ENCODE measurements at regions of chr14 and their contacts with region 1.

Region 1: DNA sequence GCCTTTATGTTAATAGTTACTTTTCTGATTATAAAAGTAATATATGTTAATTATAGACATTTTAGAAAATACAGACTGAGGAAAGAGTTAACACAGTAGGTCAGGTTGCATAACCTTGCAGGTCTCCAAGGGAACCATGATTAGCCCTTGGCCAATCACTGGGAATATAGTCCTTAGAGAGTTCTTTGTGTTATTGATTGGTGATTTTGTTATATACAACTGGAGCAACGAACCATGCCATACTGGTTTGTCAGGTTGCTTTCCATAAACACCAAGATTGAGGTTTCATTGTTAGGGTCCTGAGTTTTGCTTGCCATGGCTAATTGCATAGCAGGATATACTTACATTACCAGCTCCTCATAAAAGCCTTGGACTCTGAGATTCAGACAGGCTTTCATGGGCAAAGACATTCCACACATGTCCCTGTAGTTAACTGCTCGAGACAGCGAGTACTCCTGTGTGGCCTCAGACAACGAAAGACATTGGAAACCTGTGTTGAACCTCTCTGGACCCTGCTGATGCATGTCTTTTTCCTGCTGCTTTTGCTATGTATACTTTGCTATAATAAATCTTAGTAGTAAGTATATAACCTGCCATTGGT is 33.7 kb downstream of the MAPK1IP1L start:
- DNase-seq: no peak
- H3K4me3 ChIP-seq: no peak overlapping the region
- H3K27ac ChIP-seq: no peak overlapping the region
- H3K4me1 ChIP-seq: no peaks in the 10 kb centered on the region
- H3K27me3 ChIP-seq: no peaks in the 10 kb centered on the region
- CTCF ChIP-seq: no peak
- EP300 ChIP-seq: no peak
- POLR2A ChIP-seq: no peak

Region 2: GRCh38 chr14:55160989-55161388 is 75.8 kb after region 1 on chr14:
- intact Hi-C with region 1: loop called (anchors 5 to 10 kb)
- DNase-seq: no peak
- H3K4me3 ChIP-seq: no peak overlapping the region
- H3K27ac ChIP-seq: no peak overlapping the region
- H3K4me1 ChIP-seq: no peaks in the 10 kb centered on the region
- H3K27me3 ChIP-seq: peaks cover 5% of the 10 kb centered on the region
- CTCF ChIP-seq: peak in 2 of 3 donors; percentile 34 to 65
- EP300 ChIP-seq: no peak
- POLR2A ChIP-seq: no peak

Region 3: DNA sequence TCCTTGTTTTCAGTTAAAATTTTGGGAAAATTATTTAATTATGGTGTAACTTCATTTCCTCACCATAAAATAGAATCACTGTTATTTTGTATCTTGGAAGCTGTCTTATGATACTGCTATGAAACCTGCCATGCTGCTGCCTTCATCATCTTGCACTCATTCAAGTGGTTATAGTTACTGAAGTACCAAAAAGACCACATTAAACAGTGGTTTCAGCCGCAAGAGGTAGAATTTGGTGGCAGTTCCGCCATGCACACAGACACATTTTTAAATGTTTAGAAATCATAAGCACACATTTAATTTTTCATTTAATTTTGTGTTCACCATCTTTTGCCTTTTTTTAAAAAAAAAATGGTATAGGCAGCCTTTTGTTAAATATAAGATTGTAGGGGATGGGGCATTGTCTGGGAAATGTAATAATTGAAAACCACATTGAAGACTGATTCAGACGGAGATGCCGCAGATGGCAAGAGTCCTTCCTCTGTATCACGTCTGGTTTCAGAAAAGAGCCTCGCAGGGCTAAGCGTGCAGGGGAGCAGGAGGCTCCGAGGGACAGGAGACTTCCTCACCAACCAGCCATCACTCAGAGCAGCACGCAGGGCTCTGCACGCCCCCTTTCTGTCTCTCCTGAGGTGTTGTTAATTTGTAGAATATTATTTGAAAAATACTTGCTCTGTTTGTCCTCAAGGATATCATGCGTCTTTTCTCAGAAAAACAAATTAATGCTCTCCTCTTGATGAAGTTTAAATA is 917.9 kb after region 1 on chr14:
- intact Hi-C with region 1: no loop called
- DNase-seq: no peak
- H3K4me3 ChIP-seq: no peak overlapping the region
- H3K27ac ChIP-seq: no peak overlapping the region
- H3K4me1 ChIP-seq: peaks cover 2% of the 10 kb centered on the region
- H3K27me3 ChIP-seq: no peaks in the 10 kb centered on the region
- CTCF ChIP-seq: no peak
- EP300 ChIP-seq: no peak
- POLR2A ChIP-seq: no peak

Region 4: DNA sequence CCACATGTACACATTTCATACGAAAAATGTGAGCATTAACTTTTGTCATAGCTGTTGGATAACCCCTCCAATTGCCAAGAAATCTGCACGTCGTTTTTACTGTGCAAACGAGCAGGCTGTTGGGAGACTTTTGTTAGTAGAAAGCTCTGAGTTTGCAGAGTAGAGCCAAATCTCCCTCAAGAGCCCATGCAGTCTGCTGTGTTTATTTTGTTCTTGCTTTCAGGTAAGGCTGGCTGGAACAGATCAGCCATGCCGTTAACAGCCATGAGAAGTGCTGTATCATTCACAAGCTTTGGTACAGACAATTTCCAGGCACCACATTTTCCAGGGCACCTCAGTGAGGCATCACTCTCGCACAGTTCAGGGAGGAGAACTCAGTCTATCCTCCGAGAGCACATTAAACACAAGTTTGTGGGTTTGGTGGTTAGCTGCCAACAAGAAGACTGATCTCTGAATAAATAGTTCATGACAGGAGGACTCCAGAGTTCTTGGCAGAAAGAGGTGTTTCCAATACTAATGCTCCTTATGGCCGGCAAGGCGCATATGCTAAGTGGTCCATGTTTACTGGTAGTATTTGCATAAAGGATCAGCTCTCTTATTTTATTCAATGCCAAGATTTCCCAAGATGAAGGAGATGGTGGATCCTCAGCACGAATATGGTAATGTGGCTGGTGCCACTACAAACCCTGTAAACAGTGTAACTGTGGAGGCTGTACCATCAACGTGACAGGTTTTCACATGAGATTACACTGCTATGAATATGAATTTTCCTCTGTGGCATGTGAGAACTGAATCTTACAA is 1002.7 kb after region 1 on chr14:
- intact Hi-C with region 1: no loop called
- DNase-seq: no peak
- H3K4me3 ChIP-seq: no peak overlapping the region
- H3K27ac ChIP-seq: no peak overlapping the region
- H3K4me1 ChIP-seq: no peaks in the 10 kb centered on the region
- H3K27me3 ChIP-seq: no peaks in the 10 kb centered on the region
- CTCF ChIP-seq: no peak
- EP300 ChIP-seq: no peak
- POLR2A ChIP-seq: no peak

Measured in ovary (tissue), 10 donors.